ENCODE measurements at regions of chr12 and their contacts with region 1.

Region 1: GRCh38 chr12:64801381-64801780 is 23.1 kb upstream of the TBC1D30 start:
- H3K4me3 ChIP-seq: no peak overlapping the region
- H3K27ac ChIP-seq: no peak overlapping the region
- H3K4me1 ChIP-seq: 0 out of 2 replicates have a peak, but pooled peaks cover 2% of the 10 kb centered on the region
- CTCF ChIP-seq: peak; percentile 49; the same call in 1 of the 2 replicates

Region 2: GRCh38 chr12:64780531-64781279 is 20.7 kb before region 1 on chr12:
- CTCF ChIA-PET with region 1: interaction called, 31 read pairs
- POLR2A ChIA-PET with region 1: interaction called, 4 read pairs
- H3K4me3 ChIP-seq: peak overlapping the region; percentile 61
- H3K27ac ChIP-seq: peak overlapping the region; percentile 79
- H3K4me1 ChIP-seq: 0 out of 2 replicates have a peak, but pooled peaks cover 3% of the 10 kb centered on the region
- CTCF ChIP-seq: peak; percentile 47

Region 3: GRCh38 chr12:64790222-64790621 is 11.2 kb before region 1 on chr12:
- CTCF ChIA-PET with region 1: interaction called, 50 read pairs
- POLR2A ChIA-PET with region 1: no interaction called
- H3K4me3 ChIP-seq: no peak overlapping the region
- H3K27ac ChIP-seq: no peak overlapping the region
- H3K4me1 ChIP-seq: no peaks in the 10 kb centered on the region
- CTCF ChIP-seq: no peak

Region 4: DNA sequence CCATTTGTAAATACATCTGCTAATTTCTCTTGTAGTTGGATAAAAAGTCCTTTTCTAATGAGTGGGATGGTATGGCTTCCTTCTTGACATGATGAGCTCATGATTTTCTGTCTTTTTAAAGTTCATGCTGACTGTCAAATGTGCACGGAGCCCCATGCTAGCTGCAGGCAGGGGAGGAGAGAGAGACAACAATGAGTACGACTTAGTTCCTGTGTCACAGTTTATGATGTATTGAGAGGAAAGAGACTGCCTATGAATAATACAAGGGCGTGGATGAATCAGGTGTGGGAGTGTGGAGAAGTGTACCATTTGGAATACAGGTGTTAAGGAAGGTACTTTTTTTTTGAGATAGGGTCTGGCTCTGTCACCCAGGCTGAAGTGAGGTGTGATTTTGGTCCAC is 12.3 kb after region 1 on chr12:
- CTCF ChIA-PET with region 1: interaction called, 50 read pairs
- POLR2A ChIA-PET with region 1: no interaction called
- H3K4me3 ChIP-seq: no peak overlapping the region
- H3K27ac ChIP-seq: no peak overlapping the region
- H3K4me1 ChIP-seq: peaks cover 10% of the 10 kb centered on the region; the same call in 1 of the 2 replicates
- CTCF ChIP-seq: no peak

Region 5: DNA sequence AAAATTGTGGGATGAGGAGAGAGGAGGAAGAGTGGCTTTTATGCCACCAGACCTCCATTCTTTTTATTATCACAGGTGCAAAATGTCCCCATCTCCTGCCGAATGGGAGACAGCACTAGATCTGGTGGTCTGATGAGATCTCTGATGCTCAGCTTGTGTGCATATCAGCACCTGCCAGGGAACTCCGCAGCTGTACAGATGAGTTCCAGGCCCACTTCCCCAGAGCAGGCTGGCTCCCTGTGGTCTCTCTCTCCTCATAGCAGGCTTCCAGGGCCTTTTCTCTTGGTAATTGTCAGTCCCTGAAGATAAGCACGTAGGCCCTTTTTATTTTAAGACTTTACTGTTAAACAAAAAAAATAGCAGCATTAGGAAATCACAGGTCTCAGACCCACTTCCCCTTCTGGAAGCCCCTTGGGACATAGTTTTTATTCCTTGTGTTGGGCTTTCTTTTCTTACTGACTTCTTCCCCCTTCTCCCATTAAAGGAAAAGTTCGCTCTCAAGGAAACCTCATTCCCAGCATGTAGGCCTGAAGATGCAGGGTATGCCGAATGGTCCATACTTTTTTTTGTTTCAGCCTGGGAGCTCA is 18.5 kb after region 1 on chr12:
- CTCF ChIA-PET with region 1: interaction called, 10 read pairs
- POLR2A ChIA-PET with region 1: no interaction called
- H3K4me3 ChIP-seq: no peak overlapping the region
- H3K27ac ChIP-seq: no peak overlapping the region
- H3K4me1 ChIP-seq: no peaks in the 10 kb centered on the region; the same call in 1 of the 2 replicates
- CTCF ChIP-seq: no peak

Region 6: GRCh38 chr12:64826234-64826633 is 24.9 kb after region 1 on chr12:
- CTCF ChIA-PET with region 1: interaction called, 10 read pairs
- POLR2A ChIA-PET with region 1: no interaction called
- H3K4me3 ChIP-seq: no peak overlapping the region
- H3K27ac ChIP-seq: no peak overlapping the region
- H3K4me1 ChIP-seq: peaks cover 14% of the 10 kb centered on the region
- CTCF ChIP-seq: no peak